GM12878 (cell line): ENCODE measurements at regions of chr20 and their contacts with region 1.

Region 1: GRCh38 chr20:13105864-13106457 is 97.2 kb downstream of the SPTLC3 start:
- DNase-seq: no peak
- ATAC-seq: peak; percentile 65
- H3K4me3 ChIP-seq: no peak overlapping the region
- H3K27ac ChIP-seq: no peak overlapping the region
- H3K4me1 ChIP-seq: no peaks in the 10 kb centered on the region
- H3K27me3 ChIP-seq: no peaks in the 10 kb centered on the region; a peak in 2 of 4 replicates
- CTCF ChIP-seq: peak; percentile 52 to 64 (median 52)
- EP300 ChIP-seq: no peak
- POLR2A ChIP-seq: no peak
- RAD21 ChIP-seq: peak; percentile 83

Region 2: DNA sequence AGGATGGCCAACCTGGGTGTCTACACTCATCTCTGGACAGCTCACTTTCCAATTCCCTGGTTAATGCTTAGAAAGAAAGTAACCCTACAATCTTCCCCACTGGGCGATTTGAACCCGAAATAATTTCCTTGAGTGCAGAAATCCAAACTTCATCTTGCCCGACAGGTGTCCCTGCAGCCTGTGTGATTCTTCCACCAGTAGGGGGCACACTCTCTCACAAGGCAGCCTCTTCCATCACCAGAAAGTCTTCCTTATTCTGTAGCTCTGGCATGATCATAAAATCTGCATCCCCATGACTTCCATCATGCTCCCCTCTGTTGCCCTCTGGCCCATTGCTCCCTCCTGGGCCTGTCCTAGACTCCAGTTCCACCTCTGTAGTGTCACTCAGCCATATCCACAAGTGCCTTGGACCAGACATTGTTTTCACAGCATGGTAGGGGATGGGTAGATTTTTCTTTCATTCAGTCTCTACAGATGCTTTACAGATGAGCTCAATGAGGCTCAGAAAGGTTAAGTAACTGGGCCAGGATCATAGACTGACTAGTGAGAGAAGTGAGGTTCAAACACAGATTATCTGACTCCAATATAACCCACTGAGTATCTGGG is 267.6 kb before region 1 on chr20:
- CTCF ChIA-PET with region 1: no interaction called
- POLR2A ChIA-PET with region 1: no interaction called
- RAD21 ChIA-PET with region 1: no interaction called
- SMC1A ChIA-PET with region 1: no interaction called
- in situ Hi-C with region 1: no loop called
- intact Hi-C with region 1: loop called (anchors 10 kb)
- DNase-seq: no peak
- ATAC-seq: no peak; the same call in 2 of the 3 replicates
- H3K4me3 ChIP-seq: no peak overlapping the region
- H3K27ac ChIP-seq: no peak overlapping the region
- H3K4me1 ChIP-seq: no peaks in the 10 kb centered on the region
- H3K27me3 ChIP-seq: no peaks in the 10 kb centered on the region
- CTCF ChIP-seq: peak in 2 of 3 experiments; percentile 27 to 33; a peak in 4 of 6 replicates
- EP300 ChIP-seq: no peak
- POLR2A ChIP-seq: no peak
- RAD21 ChIP-seq: no peak

Region 3: GRCh38 chr20:12970372-12970821 is 135.6 kb before region 1 on chr20:
- CTCF ChIA-PET with region 1: interaction called, 12 read pairs
- POLR2A ChIA-PET with region 1: no interaction called
- RAD21 ChIA-PET with region 1: no interaction called
- SMC1A ChIA-PET with region 1: interaction called, 3 read pairs
- in situ Hi-C with region 1: loop called (anchors 10 kb)
- intact Hi-C with region 1: loop called (anchors 1 kb)
- DNase-seq: no peak
- ATAC-seq: peak; percentile 52; the same call in 1 of the 3 replicates
- H3K4me3 ChIP-seq: no peak overlapping the region
- H3K27ac ChIP-seq: no peak overlapping the region
- H3K4me1 ChIP-seq: no peaks in the 10 kb centered on the region
- H3K27me3 ChIP-seq: no peaks in the 10 kb centered on the region
- CTCF ChIP-seq: peak; percentile 28 to 56 (median 48); a peak in 5 of 6 replicates
- EP300 ChIP-seq: no peak
- POLR2A ChIP-seq: no peak
- RAD21 ChIP-seq: peak; percentile 69

Region 4: DNA sequence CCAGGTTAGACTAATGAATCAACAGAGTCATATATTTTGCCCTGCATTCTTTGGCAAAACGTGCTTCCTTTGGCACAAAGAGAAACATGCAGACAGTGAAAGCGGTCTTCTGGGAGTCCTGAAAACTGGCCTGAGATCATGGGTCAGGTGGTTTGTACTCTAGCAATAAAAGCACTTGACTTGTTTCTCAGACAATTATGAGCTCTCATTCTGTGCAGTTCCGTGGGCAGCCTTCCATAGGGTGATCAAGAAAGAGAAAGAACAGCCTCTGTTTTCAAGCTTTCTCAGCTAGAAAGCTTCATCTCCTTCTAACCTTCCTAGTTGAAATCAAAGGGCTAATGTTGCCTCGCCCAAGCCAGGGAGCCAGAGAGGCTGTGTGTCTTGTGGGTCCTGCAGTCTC is 52.4 kb after region 1 on chr20:
- CTCF ChIA-PET with region 1: no interaction called
- POLR2A ChIA-PET with region 1: no interaction called
- RAD21 ChIA-PET with region 1: no interaction called
- SMC1A ChIA-PET with region 1: no interaction called
- in situ Hi-C with region 1: no loop called
- intact Hi-C with region 1: no loop called
- DNase-seq: no peak
- ATAC-seq: no peak
- H3K4me3 ChIP-seq: no peak overlapping the region
- H3K27ac ChIP-seq: no peak overlapping the region
- H3K4me1 ChIP-seq: no peaks in the 10 kb centered on the region
- H3K27me3 ChIP-seq: no peaks in the 10 kb centered on the region; a peak in 1 of 4 replicates
- CTCF ChIP-seq: no peak
- EP300 ChIP-seq: no peak
- POLR2A ChIP-seq: no peak
- RAD21 ChIP-seq: no peak